Breast epithelium (tissue), 4 donors: ENCODE measurements at regions of chr11 and their contacts with region 1.

Region 1: GRCh38 chr11:96082002-96082899 is 158.3 kb upstream of the MTMR2 start:
- DNase-seq: no peak
- H3K4me3 ChIP-seq: no peak overlapping the region
- H3K27ac ChIP-seq: peak overlapping the region in 1 of 2 donors; percentile 53
- H3K4me1 ChIP-seq: no peaks in the 10 kb centered on the region
- H3K27me3 ChIP-seq: no peaks in the 10 kb centered on the region
- CTCF ChIP-seq: no peak
- POLR2A ChIP-seq: no peak

Region 2: DNA sequence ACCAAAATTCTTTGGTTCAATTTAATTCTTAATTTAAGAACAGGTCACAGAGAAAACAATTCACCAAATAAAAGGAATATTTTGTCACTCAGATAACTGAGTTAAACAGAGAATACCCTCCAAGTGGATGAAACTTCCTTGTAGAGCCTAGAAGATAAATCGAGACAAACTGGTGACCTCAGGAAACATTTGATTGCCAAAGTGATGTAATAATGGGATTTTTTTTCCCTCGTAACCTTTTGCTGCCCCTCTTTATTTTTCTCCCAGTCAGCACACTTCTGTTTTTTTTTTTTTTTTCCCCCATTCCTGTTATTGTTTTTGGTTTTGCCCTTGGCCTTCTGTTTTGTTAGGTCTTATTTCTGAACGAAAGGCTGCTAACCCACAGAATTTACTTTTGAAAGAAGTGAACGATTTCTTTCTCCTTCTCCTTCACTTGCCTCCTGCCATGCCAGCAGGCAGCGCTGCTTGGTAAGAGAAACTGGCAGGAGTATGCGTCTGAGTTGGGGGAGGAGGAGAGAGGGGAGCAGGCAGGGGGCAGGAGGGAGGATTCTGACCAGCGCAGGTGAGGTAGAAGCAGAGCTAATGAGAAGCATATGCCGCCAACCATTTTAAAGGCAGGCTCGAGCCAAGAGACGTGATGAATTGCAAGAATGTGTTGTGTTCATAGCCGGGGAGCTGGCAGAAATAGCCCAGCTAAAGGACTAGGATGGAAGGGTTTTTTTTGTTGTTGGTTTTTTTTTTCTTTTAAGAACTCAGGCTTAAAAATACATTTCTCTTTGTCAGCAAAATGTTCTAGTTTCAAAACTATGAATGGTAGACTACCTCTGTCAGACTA is 36.4 kb before region 1 on chr11:
- intact Hi-C with region 1: no loop called
- DNase-seq: peak; percentile 54 to 83
- H3K4me3 ChIP-seq: peak overlapping the region; percentile 20 to 59 (median 22)
- H3K27ac ChIP-seq: peak overlapping the region; percentile 88 to 91
- H3K4me1 ChIP-seq: no peaks in the 10 kb centered on the region
- H3K27me3 ChIP-seq: no peaks in the 10 kb centered on the region
- CTCF ChIP-seq: peak in 1 of 3 donors; percentile 41
- POLR2A ChIP-seq: no peak

Region 3: DNA sequence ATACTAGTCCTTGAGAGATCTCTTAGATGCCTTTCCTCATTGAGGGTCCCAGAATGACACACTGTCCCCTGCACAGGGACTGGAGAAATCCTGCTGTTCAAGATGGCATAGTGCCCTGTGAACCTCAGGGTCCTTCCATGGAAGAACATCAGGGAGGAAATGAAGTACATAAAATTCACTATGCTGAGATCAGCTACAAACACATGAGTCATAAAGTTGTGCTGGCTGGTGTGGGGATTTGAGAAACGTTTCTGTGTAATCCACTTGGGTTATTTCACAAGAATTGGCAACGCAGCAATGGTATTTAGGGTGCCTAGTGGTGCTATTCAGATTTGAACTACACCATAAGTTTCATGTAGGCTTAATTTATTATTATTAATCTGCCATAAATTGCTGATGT is 86.4 kb after region 1 on chr11:
- intact Hi-C with region 1: loop called (anchors 5 kb)
- DNase-seq: peak in 1 of 2 donors; percentile 71
- H3K4me3 ChIP-seq: no peak overlapping the region
- H3K27ac ChIP-seq: peak overlapping the region; percentile 89
- H3K4me1 ChIP-seq: peaks cover 0 to 22% of the 10 kb centered on the region in 2 donors
- H3K27me3 ChIP-seq: no peaks in the 10 kb centered on the region
- CTCF ChIP-seq: peak in 2 of 3 donors; percentile 10 to 35
- POLR2A ChIP-seq: no peak